Left ventricle myocardium superior (tissue), 1 donor: ENCODE measurements at regions of chr16 and their contacts with region 1.

Region 1: GRCh38 chr16:75471723-75472633 is 7.5 kb upstream of the TMEM170A start:
- DNase-seq: no peak
- ATAC-seq: peak; percentile 97

Region 2: GRCh38 chr16:75279305-75279704 is 192.7 kb before region 1 on chr16:
- intact Hi-C with region 1: no loop called
- DNase-seq: no peak
- ATAC-seq: peak; percentile 52

Region 3: DNA sequence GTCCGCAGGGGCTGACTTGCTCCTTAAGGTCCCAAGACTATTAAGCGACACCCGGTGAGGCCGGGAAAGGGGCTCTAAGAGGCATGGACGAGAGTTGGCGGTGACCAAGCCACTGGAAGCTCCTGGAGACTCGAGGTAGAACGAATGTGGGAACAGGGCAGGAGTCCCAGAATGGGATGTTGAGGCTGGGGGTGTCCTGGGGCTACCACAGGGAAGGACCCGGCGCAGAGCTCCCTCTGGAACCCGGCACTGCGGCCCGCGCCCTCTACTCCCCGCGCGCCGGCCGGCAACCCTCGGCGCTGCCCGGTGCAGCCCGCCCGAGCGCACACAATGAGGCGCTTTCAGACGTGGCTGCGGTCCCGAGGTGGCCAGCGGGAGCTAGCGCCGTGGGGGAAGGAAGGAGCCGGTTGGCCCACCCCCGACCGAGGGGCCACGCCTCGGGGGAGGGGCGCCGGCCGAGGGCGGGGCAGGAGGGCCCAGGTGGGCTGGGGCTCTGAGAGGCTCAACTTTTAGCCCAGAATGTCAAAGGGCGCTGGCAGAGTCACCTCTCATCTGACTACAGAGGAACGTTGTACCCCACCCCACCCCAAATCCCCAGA is 23.2 kb after region 1 on chr16 and contains the start of gene CHST6:
- intact Hi-C with region 1: no loop called
- DNase-seq: peak; percentile 66
- ATAC-seq: peak; percentile 69
- total RNA-seq, gene CHST6: 0.27 TPM

Region 4: GRCh38 chr16:75764154-75764768 is 292.3 kb after region 1 on chr16:
- intact Hi-C with region 1: loop called (anchors 5 kb)
- DNase-seq: no peak
- ATAC-seq: peak; percentile 87